ENCODE measurements at regions of chr9 and their contacts with region 1.

Region 1: DNA sequence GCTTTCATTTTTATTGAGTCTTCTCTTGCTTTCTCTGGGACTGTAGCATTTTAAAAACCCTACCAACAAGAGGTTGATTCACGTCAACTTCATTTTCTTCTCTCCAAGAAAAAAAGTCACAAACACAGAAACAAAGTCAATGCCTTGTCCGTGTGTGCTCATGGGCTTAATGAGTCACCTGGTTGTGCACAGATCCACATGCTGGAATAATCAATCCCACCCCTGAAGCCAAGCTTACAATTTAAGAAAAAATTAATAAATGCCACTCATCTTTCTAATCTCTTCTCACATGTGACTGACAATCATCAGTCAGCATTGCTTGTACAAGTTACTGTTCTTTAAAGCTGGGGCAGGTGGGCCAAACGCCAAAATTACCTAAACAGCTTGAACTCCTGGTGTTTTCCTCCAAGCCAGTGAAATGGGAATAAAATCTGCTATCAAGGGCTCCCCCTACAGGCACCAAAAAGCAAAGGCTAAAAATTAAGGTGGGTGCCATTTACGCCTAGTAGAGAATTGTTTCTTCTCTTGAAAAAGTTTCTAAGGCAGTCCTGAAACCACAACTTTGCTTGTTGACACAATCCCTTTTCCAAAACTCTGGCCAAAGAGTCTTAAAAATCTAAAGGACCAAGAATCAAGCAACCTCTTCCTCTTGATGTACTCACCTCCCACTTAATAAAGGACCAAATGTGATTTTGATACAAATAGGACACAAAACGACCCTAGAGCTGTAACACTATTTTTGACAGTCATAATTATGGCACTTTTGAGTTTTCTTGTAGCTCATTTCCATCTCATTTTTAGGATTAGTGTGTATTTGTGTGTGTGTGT is 21.3 kb downstream of the TRMO start:
- H3K4me3 ChIP-seq: no peak overlapping the region
- H3K27ac ChIP-seq: no peak overlapping the region
- H3K4me1 ChIP-seq: no peaks in the 10 kb centered on the region
- CTCF ChIP-seq: no peak

Region 2: GRCh38 chr9:97696803-97697601 is 203.9 kb before region 1 on chr9 and contains the start of gene XPA:
- CTCF ChIA-PET with region 1: interaction called, 12 read pairs
- POLR2A ChIA-PET with region 1: interaction called, 3 read pairs
- H3K4me3 ChIP-seq: peak within 1 kb of the TSS; percentile 96
- H3K27ac ChIP-seq: peak within 1 kb of the TSS; percentile 74
- H3K4me1 ChIP-seq: no peaks in the 10 kb centered on the region
- CTCF ChIP-seq: no peak

Region 3: GRCh38 chr9:97703437-97704344 is 197.3 kb before region 1 on chr9:
- CTCF ChIA-PET with region 1: interaction called, 43 read pairs
- POLR2A ChIA-PET with region 1: no interaction called
- H3K4me3 ChIP-seq: no peak overlapping the region
- H3K27ac ChIP-seq: peak overlapping the region; percentile 8; the same call in 1 of the 2 replicates
- H3K4me1 ChIP-seq: no peaks in the 10 kb centered on the region; the same call in 1 of the 2 replicates
- CTCF ChIP-seq: no peak

Region 4: DNA sequence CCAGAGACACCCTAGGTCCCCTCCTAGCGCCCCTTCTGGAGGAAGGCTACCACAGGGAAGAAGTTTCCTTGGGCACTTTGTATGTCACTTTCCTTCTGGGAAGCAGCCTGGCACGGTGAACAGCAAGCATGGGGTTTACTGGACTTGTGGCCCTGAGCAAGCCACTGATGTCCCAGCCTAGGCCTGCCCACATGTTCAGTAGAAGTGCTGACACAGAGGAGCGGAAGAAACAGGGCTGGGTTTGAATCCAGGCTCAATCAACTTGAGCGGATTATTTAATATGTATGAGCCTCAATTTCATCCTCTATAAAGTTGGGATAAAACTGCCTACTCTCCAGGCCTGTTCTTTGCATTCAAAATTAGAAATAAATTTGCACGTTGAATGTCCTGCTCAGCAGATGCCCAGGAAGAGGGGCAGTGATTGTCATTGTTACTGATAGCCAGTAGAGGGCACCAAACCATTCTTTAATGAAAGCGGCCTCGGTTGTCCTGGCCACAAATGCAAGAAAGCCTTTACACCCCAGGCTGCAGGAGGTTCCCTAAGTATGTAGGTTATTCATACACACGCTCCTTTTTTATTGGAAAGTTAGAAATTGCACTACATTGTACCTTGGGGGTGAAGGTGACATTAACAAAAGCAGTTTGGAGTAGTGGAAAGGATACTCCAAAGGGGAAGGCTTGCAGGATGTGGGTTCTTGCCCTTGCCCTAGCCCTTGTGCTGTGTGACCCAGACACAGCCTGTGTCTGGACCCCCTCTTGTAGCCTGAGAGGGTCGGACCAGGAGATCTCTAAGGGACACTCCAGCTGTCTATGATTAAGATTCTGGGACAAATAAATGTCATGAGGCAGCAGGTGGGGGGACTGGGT is 190.4 kb before region 1 on chr9:
- CTCF ChIA-PET with region 1: interaction called, 43 read pairs
- POLR2A ChIA-PET with region 1: no interaction called
- H3K4me3 ChIP-seq: no peak overlapping the region
- H3K27ac ChIP-seq: no peak overlapping the region
- H3K4me1 ChIP-seq: no peaks in the 10 kb centered on the region
- CTCF ChIP-seq: no peak; the same call in 1 of the 2 replicates

Region 5: GRCh38 chr9:97779608-97780007 is 121.3 kb before region 1 on chr9:
- CTCF ChIA-PET with region 1: no interaction called
- POLR2A ChIA-PET with region 1: no interaction called
- H3K4me3 ChIP-seq: no peak overlapping the region
- H3K27ac ChIP-seq: no peak overlapping the region
- H3K4me1 ChIP-seq: no peaks in the 10 kb centered on the region
- CTCF ChIP-seq: no peak

Region 6: DNA sequence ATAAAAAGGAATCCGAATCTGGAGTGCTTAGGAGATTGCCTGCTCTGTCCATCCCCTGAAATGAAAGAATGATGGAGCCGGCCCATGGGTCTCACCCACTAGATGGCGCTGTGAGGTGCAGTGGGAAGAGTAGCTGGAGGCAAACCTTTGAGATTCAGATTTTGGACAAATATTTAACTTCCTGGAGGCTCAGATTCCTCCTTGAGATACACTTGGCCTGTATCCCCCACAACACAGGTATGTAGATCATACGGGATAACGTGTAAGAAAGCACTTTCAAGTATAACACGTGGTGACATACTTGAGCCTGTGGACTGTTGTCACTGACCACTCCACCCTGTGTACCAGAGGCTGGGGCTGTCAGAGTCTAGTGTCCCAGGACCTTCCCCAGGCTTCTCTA is 10.9 kb before region 1 on chr9:
- CTCF ChIA-PET with region 1: interaction called, 132 read pairs
- POLR2A ChIA-PET with region 1: no interaction called
- H3K4me3 ChIP-seq: no peak overlapping the region
- H3K27ac ChIP-seq: no peak overlapping the region
- H3K4me1 ChIP-seq: no peaks in the 10 kb centered on the region
- CTCF ChIP-seq: no peak